ENCODE measurements at regions of chr2 and their contacts with region 1.

Region 1: GRCh38 chr2:98649135-98649991 is 41.0 kb downstream of the UNC50 start:
- DNase-seq: peak; percentile 62 to 93 (median 78)
- H3K4me3 ChIP-seq: no peak overlapping the region
- H3K27ac ChIP-seq: peak overlapping the region in 11 of 59 donors; percentile 4 to 44 (median 20)
- H3K27me3 ChIP-seq: no peaks in the 10 kb centered on the region
- CTCF ChIP-seq: peak; percentile 96 to 100 (median 99)

Region 2: GRCh38 chr2:98518090-98518489 is 131.3 kb before region 1 on chr2:
- intact Hi-C with region 1: no loop called
- DNase-seq: no peak
- H3K4me3 ChIP-seq: no peak overlapping the region
- H3K27ac ChIP-seq: peak overlapping the region in 15 of 59 donors; percentile 2 to 55 (median 12)
- H3K27me3 ChIP-seq: no peaks in the 10 kb centered on the region
- CTCF ChIP-seq: peak in 51 of 56 donors; percentile 8 to 64 (median 38)

Region 3: GRCh38 chr2:98731041-98731893 is 81.9 kb after region 1 on chr2 and contains the start of gene MGAT4A:
- intact Hi-C with region 1: loop called in 1 of 2 experiments (anchors 2 kb)
- DNase-seq: peak; percentile 66 to 90 (median 74)
- H3K4me3 ChIP-seq: peak within 1 kb of the TSS; percentile 67 to 99 (median 86)
- H3K27ac ChIP-seq: peak within 1 kb of the TSS; percentile 67 to 98 (median 91)
- H3K27me3 ChIP-seq: no peaks in the 10 kb centered on the region
- CTCF ChIP-seq: peak in 5 of 56 donors; percentile 4 to 26 (median 13)
- total RNA-seq, gene MGAT4A: 42.8 to 86.5 (median 65.9) TPM

Region 4: GRCh38 chr2:98835831-98836385 is 186.5 kb after region 1 on chr2:
- intact Hi-C with region 1: loop called (anchors 1 kb)
- DNase-seq: no peak
- H3K4me3 ChIP-seq: no peak overlapping the region
- H3K27ac ChIP-seq: peak overlapping the region in 1 of 59 donors; percentile 7
- H3K27me3 ChIP-seq: no peaks in the 10 kb centered on the region
- CTCF ChIP-seq: no peak

Region 5: DNA sequence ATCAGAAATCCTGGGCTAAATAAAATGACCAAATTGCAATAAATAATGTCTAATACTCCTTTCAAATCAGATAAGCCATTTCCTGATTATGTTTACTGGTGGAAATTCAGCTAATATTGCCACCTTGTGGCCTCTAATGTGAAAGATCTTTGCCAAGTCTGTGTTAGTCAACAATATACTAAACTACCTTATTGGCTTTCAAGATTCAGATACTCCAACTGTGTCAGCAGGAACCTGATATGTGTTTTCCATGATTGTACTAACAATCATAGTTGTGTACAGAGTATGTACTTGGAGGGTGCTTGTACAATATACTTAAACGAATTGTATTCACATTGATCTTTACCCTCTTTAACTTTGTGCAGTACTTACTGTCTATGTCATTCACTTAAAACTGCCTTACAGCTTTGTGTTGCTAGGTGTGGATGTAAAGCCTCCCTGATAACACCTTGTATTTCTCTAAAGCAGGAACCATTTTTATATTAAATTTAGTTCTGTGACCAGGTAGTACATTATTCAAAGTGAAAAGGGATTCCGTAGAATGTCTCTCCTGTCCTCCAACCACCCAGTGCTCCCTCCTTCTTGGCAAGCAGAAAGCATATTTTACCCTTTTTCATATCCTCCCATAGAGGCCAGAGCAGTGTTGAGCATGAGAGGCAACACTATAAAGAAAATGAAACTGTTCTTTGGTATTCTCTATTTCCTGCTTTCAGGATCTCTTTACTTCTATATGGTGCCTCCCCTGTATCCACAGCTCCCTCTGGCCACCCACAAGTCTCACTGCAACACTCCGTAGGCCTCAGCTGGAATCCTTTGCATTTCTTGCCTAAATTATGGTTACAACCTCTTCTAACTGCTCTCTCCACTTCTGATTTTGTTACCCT is 417.0 kb after region 1 on chr2:
- intact Hi-C with region 1: loop called (anchors 5 to 10 kb)
- DNase-seq: peak in 3 of 10 donors; percentile 35 to 43 (median 40)
- H3K4me3 ChIP-seq: peak overlapping the region in 2 of 59 donors; percentile 7 to 25
- H3K27ac ChIP-seq: peak overlapping the region in 50 of 59 donors; percentile 7 to 78 (median 45)
- H3K27me3 ChIP-seq: no peaks in the 10 kb centered on the region
- CTCF ChIP-seq: peak in 55 of 56 donors; percentile 11 to 75 (median 54)